ENCODE measurements at regions of chr1 and their contacts with region 1.

Region 1: DNA sequence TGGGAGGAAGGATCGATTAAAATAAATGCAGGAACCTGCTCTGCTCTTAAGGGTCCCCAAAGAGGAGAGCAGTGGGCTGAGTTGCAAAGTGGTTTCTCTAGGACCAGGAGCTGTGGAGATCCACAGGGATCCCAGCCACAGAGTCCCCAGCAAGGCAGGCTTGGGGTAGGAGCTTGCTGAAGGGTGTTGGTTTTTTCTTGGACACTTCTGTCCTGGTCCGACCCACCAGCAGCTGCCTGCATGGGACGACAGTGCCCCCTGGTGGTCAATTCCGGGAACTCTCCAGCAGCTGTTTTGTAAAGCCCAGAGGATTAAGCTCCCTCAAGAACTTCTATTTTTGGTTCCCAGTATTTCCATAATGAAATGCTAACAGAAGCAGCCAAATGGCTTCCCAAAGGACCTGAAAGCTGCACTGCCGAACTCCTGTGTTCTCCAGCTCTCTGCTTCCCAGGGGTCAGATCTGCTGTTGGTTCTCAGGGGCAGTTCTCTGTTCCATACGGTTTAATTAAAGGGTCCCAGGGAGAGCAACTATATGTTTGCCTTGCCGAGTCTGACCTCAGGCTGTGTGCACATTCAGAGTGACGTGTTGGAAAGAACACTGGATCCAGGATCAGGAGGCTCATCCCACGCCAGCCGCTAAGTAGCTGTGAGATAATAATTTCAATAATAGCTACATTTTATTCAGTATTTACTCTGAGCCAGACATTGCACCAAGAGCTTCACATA is 23.2 kb downstream of the NENF start:
- DNase-seq: peak; percentile 55 to 96
- H3K4me3 ChIP-seq: peak overlapping the region in 1 of 2 donors; percentile 31
- H3K27ac ChIP-seq: peak overlapping the region; percentile 43 to 78
- H3K4me1 ChIP-seq: peaks cover 13 to 24% of the 10 kb centered on the region in 2 donors
- H3K27me3 ChIP-seq: no peaks in the 10 kb centered on the region
- CTCF ChIP-seq: peak; percentile 94 to 98 (median 94)

Region 2: GRCh38 chr1:211830330-211831142 is 625.4 kb before region 1 on chr1 and contains the start of gene LPGAT1:
- intact Hi-C with region 1: loop called (anchors 10 kb)
- DNase-seq: peak in 1 of 2 donors; percentile 78
- H3K4me3 ChIP-seq: peak within 1 kb of the TSS; percentile 99 to 100
- H3K27ac ChIP-seq: peak within 1 kb of the TSS; percentile 92 to 96
- H3K4me1 ChIP-seq: peaks cover 0 to 9% of the 10 kb centered on the region in 2 donors
- H3K27me3 ChIP-seq: no peaks in the 10 kb centered on the region
- CTCF ChIP-seq: peak; percentile 60 to 81 (median 72)
- total RNA-seq, gene LPGAT1: 17.1 TPM

Region 3: GRCh38 chr1:212070720-212071302 is 385.2 kb before region 1 on chr1:
- intact Hi-C with region 1: loop called (anchors 1 kb)
- DNase-seq: no peak
- H3K4me3 ChIP-seq: no peak overlapping the region
- H3K27ac ChIP-seq: no peak overlapping the region
- H3K4me1 ChIP-seq: no peaks in the 10 kb centered on the region
- H3K27me3 ChIP-seq: no peaks in the 10 kb centered on the region
- CTCF ChIP-seq: peak; percentile 63 to 89 (median 66)

Region 4: DNA sequence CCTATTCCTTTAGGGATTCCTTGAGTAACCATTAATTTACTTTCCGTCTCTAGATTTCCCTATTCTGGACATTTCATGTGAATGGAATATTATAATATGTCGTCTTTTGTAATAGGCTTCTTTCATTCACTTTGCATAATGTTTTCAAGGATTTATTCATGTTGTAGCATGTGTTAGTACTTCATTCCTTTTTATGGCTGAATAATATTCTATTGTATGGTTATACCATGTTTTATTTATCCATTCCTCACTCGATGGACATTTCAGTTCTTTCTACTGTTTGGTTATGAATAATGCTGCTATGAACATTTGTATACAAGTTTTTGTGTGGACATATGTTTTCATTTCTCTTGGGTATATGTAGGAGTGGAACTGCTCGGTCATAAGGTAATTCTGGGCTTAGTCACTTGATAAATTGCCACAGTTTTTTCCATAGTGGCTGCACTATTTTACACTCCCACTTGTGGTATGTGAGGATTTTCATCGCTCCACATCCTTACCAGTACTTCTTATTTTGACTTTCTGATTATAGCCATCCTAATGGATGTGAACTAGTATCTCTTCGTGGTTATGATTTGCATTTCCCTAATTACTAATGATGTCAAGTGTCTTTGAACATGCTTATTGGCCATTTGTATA is 153.1 kb before region 1 on chr1:
- intact Hi-C with region 1: loop called (anchors 5 kb)
- DNase-seq: no peak
- H3K4me3 ChIP-seq: no peak overlapping the region
- H3K27ac ChIP-seq: peak overlapping the region; percentile 65 to 69
- H3K4me1 ChIP-seq: peaks cover 3 to 26% of the 10 kb centered on the region in 2 donors
- H3K27me3 ChIP-seq: no peaks in the 10 kb centered on the region
- CTCF ChIP-seq: no peak

Region 5: GRCh38 chr1:212432706-212433576 is 23.0 kb before region 1 on chr1 and contains the start of gene NENF:
- intact Hi-C with region 1: loop called (anchors 1 kb)
- DNase-seq: peak; percentile 50 to 92
- H3K4me3 ChIP-seq: peak within 1 kb of the TSS; percentile 87 to 97
- H3K27ac ChIP-seq: peak within 1 kb of the TSS; percentile 88 to 98
- H3K4me1 ChIP-seq: peaks cover 3 to 9% of the 10 kb centered on the region in 2 donors
- H3K27me3 ChIP-seq: no peaks in the 10 kb centered on the region
- CTCF ChIP-seq: peak in 1 of 3 experiments; percentile 14
- total RNA-seq, gene NENF: 186 TPM